HepG2 (cell line): ENCODE measurements at regions of chr20 and their contacts with region 1.

Region 1: DNA sequence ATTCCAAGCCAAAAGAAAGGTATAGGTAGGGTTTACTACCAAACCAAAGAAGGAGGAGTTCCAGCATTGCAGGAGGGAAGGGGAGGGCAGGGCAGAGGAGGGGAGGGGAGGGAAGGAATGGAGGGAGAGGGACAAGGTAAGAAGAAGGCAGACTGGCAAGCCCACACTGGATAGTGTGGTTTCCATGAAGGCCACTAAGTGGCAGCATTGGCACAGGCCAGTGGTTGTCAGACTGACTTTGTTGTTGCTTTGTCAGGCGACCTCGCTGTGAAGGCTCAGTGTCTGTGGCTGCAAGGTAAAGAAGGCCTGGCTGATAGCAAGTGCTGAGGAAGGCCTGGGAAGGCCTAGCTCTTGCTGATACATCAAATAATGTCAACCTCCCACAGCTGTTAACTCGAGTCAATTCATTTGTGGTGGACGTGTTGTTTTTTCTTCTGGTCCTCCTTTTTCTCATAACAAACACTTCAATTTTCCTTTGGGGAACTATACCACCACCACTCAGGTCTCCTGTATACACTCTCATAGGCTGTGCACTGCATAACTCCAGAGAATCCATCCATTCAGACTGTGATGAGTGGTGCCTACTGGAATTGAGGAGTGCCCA is 7.7 kb upstream of the ZNF334 start:
- DNase-seq: peak; percentile 80
- ATAC-seq: peak; percentile 96
- H3K4me3 ChIP-seq: no peak overlapping the region
- H3K27ac ChIP-seq: no peak overlapping the region
- H3K4me1 ChIP-seq: peaks cover 27% of the 10 kb centered on the region
- H3K27me3 ChIP-seq: no peaks in the 10 kb centered on the region; a peak in 1 of 5 replicates
- CTCF ChIP-seq: peak; percentile 96
- EP300 ChIP-seq: no peak
- POLR2A ChIP-seq: no peak
- RAD21 ChIP-seq: peak; percentile 97

Region 2: GRCh38 chr20:46505506-46505905 is 15.6 kb before region 1 on chr20:
- CTCF ChIA-PET with region 1: no interaction called
- POLR2A ChIA-PET with region 1: no interaction called
- in situ Hi-C with region 1: no loop called
- intact Hi-C with region 1: no loop called
- DNase-seq: no peak
- ATAC-seq: no peak
- H3K4me3 ChIP-seq: no peak overlapping the region
- H3K27ac ChIP-seq: no peak overlapping the region
- H3K4me1 ChIP-seq: no peaks in the 10 kb centered on the region
- H3K27me3 ChIP-seq: no peaks in the 10 kb centered on the region; a peak in 1 of 5 replicates
- CTCF ChIP-seq: no peak
- EP300 ChIP-seq: no peak
- POLR2A ChIP-seq: no peak
- RAD21 ChIP-seq: no peak

Region 3: DNA sequence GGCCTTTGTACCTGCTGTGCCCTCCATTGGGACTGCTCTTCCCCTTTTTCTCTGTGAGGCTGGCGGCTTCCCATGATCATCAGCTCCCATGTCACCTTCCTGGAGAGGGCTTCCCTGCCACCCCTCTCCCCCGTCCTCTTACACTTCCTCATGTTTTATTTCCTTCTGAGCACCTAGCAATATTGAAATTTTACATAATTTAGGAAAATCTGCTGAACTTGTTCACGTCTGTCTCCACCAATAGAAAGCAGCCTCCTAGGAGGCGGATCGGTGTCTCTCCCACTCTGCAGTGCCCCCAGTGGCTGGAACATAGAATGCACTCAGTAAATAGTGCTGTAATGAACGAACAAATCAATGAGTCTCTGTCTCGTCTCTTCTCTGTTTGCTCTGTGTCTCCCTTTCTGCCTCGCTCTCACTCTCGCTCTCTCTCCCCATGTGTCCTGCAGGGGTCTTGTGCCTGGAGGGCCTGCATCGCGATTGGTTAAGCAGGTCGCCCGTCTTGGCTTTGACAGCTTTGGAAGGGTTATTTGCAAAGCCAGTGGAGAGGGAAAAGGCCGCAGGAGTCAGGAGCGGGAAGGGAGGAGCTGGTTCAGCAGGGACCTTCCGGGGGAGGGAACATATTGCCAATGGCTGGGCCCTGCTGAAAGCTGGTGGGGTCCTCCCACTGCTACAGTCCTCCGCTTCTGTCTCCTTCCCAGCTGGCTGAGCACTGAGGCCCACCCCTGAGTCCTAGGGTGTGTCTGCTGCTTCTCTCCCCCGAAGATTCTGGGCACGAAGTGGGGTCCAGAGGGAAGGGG is 41.5 kb after region 1 on chr20:
- CTCF ChIA-PET with region 1: interaction called, 5 read pairs
- POLR2A ChIA-PET with region 1: no interaction called
- in situ Hi-C with region 1: no loop called
- intact Hi-C with region 1: loop called (anchors 5 kb)
- DNase-seq: peak; percentile 87
- ATAC-seq: peak; percentile 74
- H3K4me3 ChIP-seq: peak overlapping the region; percentile 24 to 58 (median 29); a peak in 5 of 6 replicates
- H3K27ac ChIP-seq: peak overlapping the region; percentile 55
- H3K4me1 ChIP-seq: peaks cover 72% of the 10 kb centered on the region
- H3K27me3 ChIP-seq: no peaks in the 10 kb centered on the region
- CTCF ChIP-seq: peak; percentile 93
- EP300 ChIP-seq: peak; percentile 41 to 46; a peak in 2 of 4 replicates
- POLR2A ChIP-seq: no peak; a peak in 1 of 4 replicates
- RAD21 ChIP-seq: peak; percentile 65; the same call in 1 of the 2 replicates

Region 4: GRCh38 chr20:46681032-46681854 is 160.2 kb after region 1 on chr20:
- CTCF ChIA-PET with region 1: interaction called, 61 read pairs
- POLR2A ChIA-PET with region 1: interaction called, 8 read pairs
- in situ Hi-C with region 1: loop called (anchors 5 kb)
- intact Hi-C with region 1: loop called (anchors 1 kb)
- DNase-seq: peak; percentile 82
- ATAC-seq: peak; percentile 59
- H3K4me3 ChIP-seq: no peak overlapping the region
- H3K27ac ChIP-seq: no peak overlapping the region
- H3K4me1 ChIP-seq: peaks cover 88% of the 10 kb centered on the region
- H3K27me3 ChIP-seq: no peaks in the 10 kb centered on the region
- CTCF ChIP-seq: peak; percentile 97
- EP300 ChIP-seq: no peak
- POLR2A ChIP-seq: no peak
- RAD21 ChIP-seq: peak; percentile 98

Region 5: GRCh38 chr20:46699651-46700359 is 178.7 kb after region 1 on chr20:
- CTCF ChIA-PET with region 1: interaction called, 45 read pairs
- POLR2A ChIA-PET with region 1: interaction called, 6 read pairs
- in situ Hi-C with region 1: no loop called
- intact Hi-C with region 1: loop called (anchors 1 kb)
- DNase-seq: peak; percentile 66
- ATAC-seq: peak; percentile 83
- H3K4me3 ChIP-seq: no peak overlapping the region; a peak in 1 of 6 replicates
- H3K27ac ChIP-seq: no peak overlapping the region
- H3K4me1 ChIP-seq: peaks cover 66% of the 10 kb centered on the region
- H3K27me3 ChIP-seq: no peaks in the 10 kb centered on the region
- CTCF ChIP-seq: peak; percentile 96
- EP300 ChIP-seq: no peak
- POLR2A ChIP-seq: no peak
- RAD21 ChIP-seq: peak; percentile 92

Region 6: DNA sequence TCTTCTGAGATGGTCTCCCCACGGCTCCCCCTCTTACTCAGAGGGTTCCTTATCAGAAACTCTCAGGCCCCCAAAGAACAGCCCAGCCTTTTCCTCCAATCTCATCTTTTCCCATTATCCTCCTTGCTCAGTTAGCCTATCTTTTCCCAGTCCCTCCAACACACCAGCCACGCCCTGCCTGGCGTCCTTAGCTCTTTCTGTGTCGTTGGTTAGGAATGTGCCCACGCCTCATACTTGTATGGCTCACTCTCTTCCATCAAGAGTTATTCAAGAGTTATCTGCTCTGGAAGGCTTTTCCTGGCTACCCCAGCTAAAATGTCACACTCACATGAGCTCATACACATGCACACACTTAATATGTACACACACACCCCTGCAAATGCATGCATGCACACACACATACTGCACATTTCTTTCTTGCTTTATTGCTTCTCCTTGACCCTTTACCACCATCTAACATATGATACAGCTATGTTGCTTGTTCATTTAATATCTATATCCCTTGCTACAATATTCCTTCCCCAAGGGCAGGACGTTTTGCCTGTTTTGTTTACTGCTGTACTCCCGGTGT is 226.0 kb after region 1 on chr20:
- CTCF ChIA-PET with region 1: no interaction called
- POLR2A ChIA-PET with region 1: no interaction called
- in situ Hi-C with region 1: no loop called
- intact Hi-C with region 1: loop called (anchors 5 kb)
- DNase-seq: no peak
- ATAC-seq: no peak
- H3K4me3 ChIP-seq: no peak overlapping the region
- H3K27ac ChIP-seq: no peak overlapping the region
- H3K4me1 ChIP-seq: no peaks in the 10 kb centered on the region
- H3K27me3 ChIP-seq: peaks cover 11 to 64% of the 10 kb centered on the region in 2 experiments
- CTCF ChIP-seq: no peak
- EP300 ChIP-seq: no peak
- POLR2A ChIP-seq: no peak
- RAD21 ChIP-seq: no peak